Heart right ventricle (tissue), 16 donors: ENCODE measurements at regions of chr2 and their contacts with region 1.

Region 1: DNA sequence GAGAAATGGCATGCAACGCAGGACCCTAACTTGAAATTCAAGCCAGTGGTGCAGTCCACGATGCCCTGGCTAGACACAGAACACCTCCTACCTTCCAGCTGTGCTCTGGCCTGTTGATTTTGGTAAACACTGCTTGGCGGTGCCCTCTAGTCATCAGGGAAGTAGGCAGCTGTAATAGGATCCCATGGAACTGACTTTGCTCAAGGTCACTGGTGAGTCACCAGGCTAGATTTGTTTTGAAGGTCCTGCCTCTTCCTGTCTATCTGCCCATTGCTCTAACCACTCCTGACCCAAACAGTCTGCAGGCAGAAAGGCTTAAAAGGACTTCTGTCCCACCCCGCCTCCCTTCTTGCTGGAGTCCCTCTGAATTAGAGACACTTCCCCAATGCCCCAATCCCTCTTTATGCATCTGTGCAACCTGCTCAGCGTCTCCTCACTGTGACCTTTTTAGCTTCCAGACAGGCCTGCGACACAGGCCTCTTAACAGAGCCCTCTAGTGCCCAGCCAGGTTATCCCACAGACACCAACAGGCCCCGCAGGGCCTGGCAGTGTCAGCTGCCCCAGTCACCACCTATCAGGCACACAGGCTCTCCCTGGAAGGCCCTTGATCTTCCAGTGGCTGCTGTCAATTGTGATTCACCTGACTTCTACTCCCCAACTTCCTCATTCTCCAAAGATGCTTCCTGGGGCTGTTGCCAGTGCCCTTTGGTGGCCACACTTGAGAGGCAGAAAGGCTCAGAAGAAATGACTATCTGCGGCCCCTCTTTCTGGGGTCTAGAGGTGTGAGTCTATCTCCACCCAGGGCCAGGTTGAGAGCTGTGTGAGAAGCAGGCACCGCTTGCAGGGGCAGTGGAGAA is 5.2 kb downstream of the TMEM127 start:
- DNase-seq: peak; percentile 55 to 74
- ATAC-seq: peak; percentile 67 to 84 (median 80)
- H3K4me3 ChIP-seq: peak overlapping the region in 7 of 10 donors; percentile 9 to 31 (median 18)
- H3K27ac ChIP-seq: peak overlapping the region; percentile 85 to 97 (median 94)
- H3K4me1 ChIP-seq: peaks cover 49 to 94% (median 92%) of the 10 kb centered on the region in 9 donors
- H3K27me3 ChIP-seq: no peaks in the 10 kb centered on the region
- CTCF ChIP-seq: peak in 8 of 9 donors; percentile 21 to 61 (median 42)

Region 2: GRCh38 chr2:95179451-95179850 is 1081.2 kb before region 1 on chr2:
- intact Hi-C with region 1: no loop called
- DNase-seq: peak; percentile 33 to 55
- ATAC-seq: peak; percentile 55 to 91 (median 80)
- H3K4me3 ChIP-seq: no peak overlapping the region
- H3K27ac ChIP-seq: peak overlapping the region in 7 of 10 donors; percentile 1 to 82 (median 69)
- H3K4me1 ChIP-seq: peaks cover 0 to 13% (median 4%) of the 10 kb centered on the region in 9 donors
- H3K27me3 ChIP-seq: no peaks in the 10 kb centered on the region
- CTCF ChIP-seq: no peak

Region 3: DNA sequence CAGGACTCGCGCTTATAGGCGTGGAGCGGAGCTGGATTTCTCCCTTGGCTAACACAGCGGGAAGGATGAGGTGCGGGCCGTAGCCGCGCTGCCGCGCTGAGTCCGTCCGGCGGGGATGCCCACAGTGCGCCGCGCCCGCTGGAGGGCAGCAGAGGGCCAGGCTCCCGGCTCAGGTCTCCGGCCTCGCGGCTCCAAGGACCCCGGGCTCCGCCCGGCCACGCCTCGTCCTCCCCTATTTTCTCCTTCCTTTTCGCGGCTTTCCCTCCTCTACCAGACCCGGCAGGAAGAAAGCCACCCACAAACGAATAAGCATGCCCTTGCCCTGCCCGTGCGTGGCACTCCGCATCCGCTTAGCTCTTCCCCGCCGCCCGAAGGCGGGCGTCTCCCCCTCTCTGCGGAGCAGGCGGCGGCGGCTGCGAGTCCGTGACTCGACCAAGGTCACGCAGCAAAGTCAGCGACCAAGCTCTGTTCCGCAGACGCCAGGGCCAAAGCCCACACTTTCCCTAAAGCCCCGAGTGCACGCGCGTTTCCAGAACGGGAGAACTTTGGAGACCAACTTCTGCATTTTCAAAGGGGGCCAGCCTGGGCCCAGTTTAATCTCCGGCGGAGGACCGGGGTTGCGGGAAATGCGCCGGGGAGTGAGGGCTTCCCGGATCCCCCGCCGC is 914.9 kb before region 1 on chr2:
- intact Hi-C with region 1: no loop called
- DNase-seq: peak; percentile 76 to 90
- ATAC-seq: peak; percentile 90 to 95 (median 92)
- H3K4me3 ChIP-seq: peak overlapping the region; percentile 46 to 77 (median 66)
- H3K27ac ChIP-seq: peak overlapping the region; percentile 60 to 88 (median 78)
- H3K4me1 ChIP-seq: peaks cover 0 to 23% (median 11%) of the 10 kb centered on the region in 9 donors
- H3K27me3 ChIP-seq: peaks cover 0 to 61% (median 17%) of the 10 kb centered on the region in 7 donors
- CTCF ChIP-seq: peak; percentile 83 to 96 (median 93)

Region 4: DNA sequence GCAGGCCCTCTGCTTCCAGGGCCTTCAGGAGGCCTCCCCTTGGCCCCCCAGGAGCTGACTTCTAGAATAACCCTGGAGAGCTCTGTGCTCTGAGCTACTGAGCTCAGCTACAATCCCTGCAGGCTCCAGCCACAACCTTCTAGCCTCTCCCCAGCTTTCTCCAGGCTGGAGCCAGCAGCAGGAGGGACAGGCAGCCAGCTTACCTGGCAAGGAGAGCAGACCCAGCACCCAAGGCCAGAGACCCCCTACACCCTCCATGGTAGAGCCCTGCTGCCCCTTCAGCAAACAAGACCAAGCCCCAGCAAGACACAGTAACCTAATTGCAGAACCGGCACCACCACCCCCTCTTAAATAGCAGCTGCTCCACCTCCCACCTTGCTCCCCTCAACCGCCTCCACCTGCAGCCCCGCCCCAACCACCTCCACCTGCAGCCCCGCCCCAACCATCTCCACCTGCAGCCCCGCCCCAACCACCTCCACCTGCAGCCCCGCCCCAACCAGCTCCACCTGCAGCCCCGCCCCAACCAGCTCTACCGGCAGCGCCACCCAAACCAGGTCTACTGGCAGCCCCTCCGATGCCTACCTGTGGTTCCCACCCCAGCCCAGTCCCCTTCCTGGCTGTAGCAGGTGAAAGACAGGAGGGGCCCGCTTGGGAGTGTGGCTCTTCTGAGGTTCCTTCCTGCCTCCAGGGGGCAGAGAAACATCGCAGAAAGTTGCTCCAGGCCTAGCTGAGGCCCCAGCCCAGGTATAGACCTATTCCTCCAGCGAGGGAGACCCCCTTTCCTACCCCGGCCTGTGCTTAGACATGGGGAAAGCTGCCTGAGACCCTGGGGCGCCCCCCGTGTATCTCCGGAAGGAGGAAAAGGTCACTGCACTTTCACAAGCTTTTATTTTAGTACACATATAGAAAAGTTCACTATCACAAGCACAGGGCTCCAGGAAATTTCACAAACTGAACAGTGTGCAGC is 122.2 kb before region 1 on chr2 and contains the start of gene ASTL:
- intact Hi-C with region 1: loop called in 5 of 10 experiments (anchors 5 to 10 kb)
- DNase-seq: peak in 1 of 2 donors; percentile 32
- ATAC-seq: peak in 7 of 8 donors; percentile 35 to 72 (median 62)
- H3K4me3 ChIP-seq: no peak within 1 kb of the TSS
- H3K27ac ChIP-seq: no peak within 1 kb of the TSS
- H3K4me1 ChIP-seq: peaks cover 0 to 8% (median 0%) of the 10 kb centered on the region in 9 donors
- H3K27me3 ChIP-seq: peaks cover 0 to 14% (median 0%) of the 10 kb centered on the region in 7 donors
- CTCF ChIP-seq: peak; percentile 11 to 63 (median 52)
- total RNA-seq, gene ASTL: not detected

Region 5: DNA sequence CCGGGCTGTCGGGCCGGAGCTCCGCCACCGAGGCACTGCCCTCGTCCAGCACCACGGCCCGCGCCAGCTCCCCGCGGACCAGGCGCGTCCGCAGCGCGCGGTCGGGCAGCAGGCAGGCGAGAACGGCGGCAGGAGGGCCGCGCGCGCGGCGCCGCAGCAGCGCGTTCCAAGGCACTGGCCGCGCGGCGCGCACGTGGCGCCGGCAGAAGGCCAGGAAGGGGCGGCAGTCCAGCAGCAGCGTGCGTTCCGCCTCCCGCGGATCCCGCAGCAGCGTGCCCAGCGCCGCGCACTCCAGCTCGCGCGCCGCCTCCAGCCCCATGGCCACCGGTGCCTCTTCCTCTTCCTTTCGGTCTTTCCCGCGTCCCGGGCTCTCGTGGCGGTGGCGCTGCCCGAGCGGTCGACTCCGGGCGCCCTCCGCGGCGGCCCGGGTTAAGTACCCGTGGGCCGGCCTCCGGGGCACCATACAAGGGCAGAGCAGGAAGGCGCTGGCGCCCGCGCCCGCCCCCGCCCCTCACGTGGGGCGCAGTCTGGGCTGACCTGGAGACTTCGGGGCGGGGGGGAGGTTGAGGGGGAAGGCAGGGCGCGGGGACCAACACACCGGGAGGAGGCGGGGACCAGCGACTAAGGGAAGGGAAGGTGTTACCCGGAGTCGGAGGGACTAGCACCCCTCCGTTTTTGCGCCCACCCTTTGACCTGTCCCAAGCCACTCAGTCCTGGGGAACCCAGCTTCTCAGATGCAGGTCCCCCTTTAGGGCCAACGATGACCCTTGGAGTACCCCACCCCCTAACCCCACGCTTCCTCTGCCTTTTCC is 115.4 kb before region 1 on chr2 and contains the start of gene DUSP2:
- intact Hi-C with region 1: loop called in 3 of 10 experiments (anchors 5 to 10 kb)
- DNase-seq: peak; percentile 64 to 75
- ATAC-seq: peak; percentile 82 to 88 (median 86)
- H3K4me3 ChIP-seq: peak within 1 kb of the TSS; percentile 32 to 68 (median 56)
- H3K27ac ChIP-seq: peak within 1 kb of the TSS in 9 of 10 donors; percentile 11 to 89 (median 52)
- H3K4me1 ChIP-seq: peaks cover 0 to 62% (median 39%) of the 10 kb centered on the region in 9 donors
- H3K27me3 ChIP-seq: peaks cover 0 to 5% (median 0%) of the 10 kb centered on the region in 7 donors
- CTCF ChIP-seq: peak in 2 of 9 donors; percentile 4 to 23
- total RNA-seq, gene DUSP2: 0.61 to 6.8 (median 2.5) TPM

Region 6: GRCh38 chr2:96188821-96189526 is 71.7 kb before region 1 on chr2:
- intact Hi-C with region 1: loop called in 1 of 10 experiments (anchors 1 kb)
- DNase-seq: no peak
- ATAC-seq: no peak
- H3K4me3 ChIP-seq: no peak overlapping the region
- H3K27ac ChIP-seq: peak overlapping the region in 4 of 10 donors; percentile 46 to 79 (median 75)
- H3K4me1 ChIP-seq: peaks cover 0 to 60% (median 23%) of the 10 kb centered on the region in 9 donors
- H3K27me3 ChIP-seq: no peaks in the 10 kb centered on the region
- CTCF ChIP-seq: no peak

Region 7: GRCh38 chr2:96208143-96209010 is 52.3 kb before region 1 on chr2 and contains the start of gene STARD7:
- intact Hi-C with region 1: loop called in 8 of 10 experiments (anchors 1 to 10 kb)
- DNase-seq: peak; percentile 99
- ATAC-seq: peak; percentile 96 to 97 (median 96)
- H3K4me3 ChIP-seq: peak within 1 kb of the TSS; percentile 63 to 100 (median 95)
- H3K27ac ChIP-seq: peak within 1 kb of the TSS; percentile 91 to 99 (median 97)
- H3K4me1 ChIP-seq: peaks cover 12 to 58% (median 54%) of the 10 kb centered on the region in 9 donors
- H3K27me3 ChIP-seq: no peaks in the 10 kb centered on the region
- CTCF ChIP-seq: peak in 7 of 9 donors; percentile 10 to 39 (median 31)
- total RNA-seq, gene STARD7: 138 to 397 (median 191) TPM

Region 8: DNA sequence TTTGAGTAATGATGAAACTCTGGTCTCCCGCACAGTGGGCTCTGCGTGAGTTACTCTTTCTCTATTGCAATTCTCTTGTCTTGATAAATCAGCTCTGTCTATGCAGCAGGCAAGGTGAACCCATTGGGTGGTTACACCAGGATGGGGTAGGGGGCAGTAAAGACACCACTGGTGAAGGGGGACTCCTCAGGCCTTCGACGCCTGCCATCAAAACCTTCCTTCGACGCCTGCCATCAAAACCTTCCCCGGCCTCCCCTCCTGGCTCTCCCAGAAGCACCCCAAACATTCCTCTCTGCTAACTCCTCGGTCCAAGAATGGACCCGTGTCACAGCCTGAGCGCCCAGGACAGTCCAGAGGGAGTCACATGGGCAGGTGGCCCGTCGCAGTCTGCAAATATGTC is 47.3 kb before region 1 on chr2:
- intact Hi-C with region 1: loop called in 7 of 10 experiments (anchors 1 to 10 kb)
- DNase-seq: no peak
- ATAC-seq: no peak
- H3K4me3 ChIP-seq: no peak overlapping the region
- H3K27ac ChIP-seq: no peak overlapping the region
- H3K4me1 ChIP-seq: peaks cover 0 to 16% (median 12%) of the 10 kb centered on the region in 9 donors
- H3K27me3 ChIP-seq: no peaks in the 10 kb centered on the region
- CTCF ChIP-seq: no peak